Activated CD4-positive, alpha-beta T cell treated with anti-CD3 and anti-CD28 coated beads for 36 hours (primary cell): ENCODE measurements at regions of chr2 and their contacts with region 1.

Region 1: GRCh38 chr2:48449073-48449840 is 80.7 kb upstream of the STON1 start:
- DNase-seq: no peak
- ATAC-seq: no peak
- H3K4me3 Mint-ChIP-seq: no peak overlapping the region
- H3K27ac Mint-ChIP-seq: peak overlapping the region; percentile 90
- H3K4me1 Mint-ChIP-seq: peaks cover 44% of the 10 kb centered on the region
- H3K27me3 Mint-ChIP-seq: no peaks in the 10 kb centered on the region

Region 2: GRCh38 chr2:48383046-48383445 is 66.2 kb before region 1 on chr2:
- CTCF ChIA-PET with region 1: no interaction called
- POLR2A ChIA-PET with region 1: no interaction called
- intact Hi-C with region 1: no loop called
- DNase-seq: no peak
- ATAC-seq: no peak
- H3K4me3 Mint-ChIP-seq: no peak overlapping the region
- H3K27ac Mint-ChIP-seq: no peak overlapping the region
- H3K4me1 Mint-ChIP-seq: no peaks in the 10 kb centered on the region
- H3K27me3 Mint-ChIP-seq: no peaks in the 10 kb centered on the region

Region 3: GRCh38 chr2:48406116-48406515 is 43.1 kb before region 1 on chr2:
- CTCF ChIA-PET with region 1: interaction called, 3 read pairs
- POLR2A ChIA-PET with region 1: interaction called, 14 read pairs
- intact Hi-C with region 1: no loop called
- DNase-seq: no peak
- ATAC-seq: no peak
- H3K4me3 Mint-ChIP-seq: no peak overlapping the region
- H3K27ac Mint-ChIP-seq: no peak overlapping the region
- H3K4me1 Mint-ChIP-seq: peaks cover 8% of the 10 kb centered on the region
- H3K27me3 Mint-ChIP-seq: no peaks in the 10 kb centered on the region